ENCODE measurements at regions of chr18 and their contacts with region 1.

Region 1: DNA sequence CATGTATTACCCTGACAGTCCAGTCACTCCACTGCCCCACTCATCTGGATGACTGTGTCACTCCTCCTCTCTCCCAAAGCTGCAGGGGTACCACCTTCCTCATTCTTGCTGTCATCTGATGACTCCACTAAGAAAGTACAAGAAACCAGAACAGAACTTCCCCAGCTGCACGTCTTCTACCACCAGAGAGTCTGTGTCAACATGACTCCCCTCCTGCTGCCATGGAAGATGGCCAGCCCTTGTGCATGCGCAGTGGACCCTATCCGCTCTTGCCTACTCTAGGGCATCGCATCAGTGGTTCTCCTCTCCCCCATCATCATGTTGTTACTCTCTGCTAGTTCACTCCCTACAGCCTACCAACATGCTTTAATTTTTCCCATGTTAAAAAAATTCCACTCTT is 14.5 kb upstream of the ST8SIA3 start:
- DNase-seq: no peak

Region 2: GRCh38 chr18:56638271-56639093 is 699.4 kb before region 1 on chr18 and contains the start of gene TXNL1:
- intact Hi-C with region 1: no loop called
- DNase-seq: peak; percentile 100
- total RNA-seq, gene TXNL1: 55.1 to 65.7 TPM

Region 3: GRCh38 chr18:56921896-56922480 is 415.9 kb before region 1 on chr18:
- intact Hi-C with region 1: loop called in 1 of 2 experiments (anchors 2 kb)
- DNase-seq: no peak